Gastrocnemius medialis (tissue), 4 donors: ENCODE measurements at regions of chr2 and their contacts with region 1.

Region 1: DNA sequence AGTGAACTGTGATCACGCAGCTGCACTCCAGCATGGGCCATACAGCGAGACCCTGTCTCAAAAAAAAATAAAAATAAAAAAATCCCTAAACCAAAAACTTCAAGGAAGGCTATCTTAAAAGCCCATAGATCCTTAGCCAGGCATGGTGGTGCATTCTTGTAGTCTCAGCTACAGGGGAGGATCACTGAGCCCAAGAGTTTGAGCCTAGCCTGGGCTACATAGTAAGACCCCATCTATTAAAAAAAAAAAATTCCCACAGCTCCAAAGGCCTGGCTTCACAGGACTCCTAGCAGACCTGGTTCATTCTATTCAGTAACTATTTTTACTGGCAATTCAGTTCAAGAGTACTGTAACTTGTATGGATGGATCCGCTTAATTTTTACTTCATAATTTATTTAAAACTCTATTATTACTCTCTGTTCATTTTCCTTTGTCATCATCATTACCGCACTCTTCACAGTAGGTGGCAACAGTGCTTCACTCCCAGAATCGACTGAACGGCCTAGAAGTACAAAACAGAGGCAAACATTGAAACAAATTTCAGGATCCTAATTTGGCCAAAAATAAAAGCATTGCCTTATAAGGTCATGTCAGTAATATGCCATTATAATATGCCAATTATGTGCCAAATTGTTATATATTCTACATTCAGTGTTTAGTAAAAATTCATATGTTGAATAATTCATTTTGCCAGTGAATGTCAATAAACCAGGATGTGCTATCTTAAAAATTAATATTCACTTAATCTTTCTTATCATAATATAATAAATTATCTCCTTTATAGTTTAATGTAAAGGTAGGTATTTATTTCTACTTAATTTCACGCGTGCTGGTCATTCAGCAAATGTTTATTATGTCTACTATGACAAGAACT is 14.3 kb upstream of the STAM2 start:
- DNase-seq: peak in 1 of 2 donors; percentile 26
- ATAC-seq: peak; percentile 80 to 88
- H3K4me3 ChIP-seq: no peak overlapping the region
- H3K27ac ChIP-seq: no peak overlapping the region
- H3K4me1 ChIP-seq: no peaks in the 10 kb centered on the region
- H3K27me3 ChIP-seq: no peaks in the 10 kb centered on the region
- CTCF ChIP-seq: peak; percentile 52 to 86 (median 84)
- POLR2A ChIP-seq: no peak

Region 2: DNA sequence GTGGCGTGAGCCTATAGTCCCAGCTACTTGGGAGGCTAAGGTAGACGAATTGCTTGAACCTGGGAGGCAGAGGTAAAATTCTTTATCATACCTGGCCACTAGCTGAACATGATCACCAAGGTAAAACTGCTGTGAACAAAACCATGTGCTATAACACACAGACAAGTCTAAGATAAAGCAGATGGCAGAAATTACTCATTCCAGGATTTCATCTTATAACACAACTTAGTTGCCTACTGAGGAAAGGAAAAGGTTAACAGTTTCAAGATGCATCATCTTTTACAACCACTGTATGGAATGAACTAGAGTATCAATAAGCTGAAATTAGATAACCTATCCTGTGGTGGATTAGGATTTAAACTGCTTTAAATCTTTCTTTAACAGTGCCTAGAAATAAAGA is 369.9 kb before region 1 on chr2:
- in situ Hi-C with region 1: no loop called
- intact Hi-C with region 1: no loop called
- DNase-seq: no peak
- ATAC-seq: no peak
- H3K4me3 ChIP-seq: no peak overlapping the region
- H3K27ac ChIP-seq: no peak overlapping the region
- H3K4me1 ChIP-seq: peaks cover 33 to 36% of the 10 kb centered on the region in 2 donors
- H3K27me3 ChIP-seq: no peaks in the 10 kb centered on the region
- CTCF ChIP-seq: no peak
- POLR2A ChIP-seq: no peak

Region 3: GRCh38 chr2:152319831-152320570 is 130.1 kb after region 1 on chr2:
- in situ Hi-C with region 1: loop called in 1 of 4 experiments (anchors 10 kb)
- intact Hi-C with region 1: no loop called
- DNase-seq: no peak
- ATAC-seq: no peak
- H3K4me3 ChIP-seq: no peak overlapping the region
- H3K27ac ChIP-seq: no peak overlapping the region
- H3K4me1 ChIP-seq: no peaks in the 10 kb centered on the region
- H3K27me3 ChIP-seq: no peaks in the 10 kb centered on the region
- CTCF ChIP-seq: no peak
- POLR2A ChIP-seq: no peak

Region 4: DNA sequence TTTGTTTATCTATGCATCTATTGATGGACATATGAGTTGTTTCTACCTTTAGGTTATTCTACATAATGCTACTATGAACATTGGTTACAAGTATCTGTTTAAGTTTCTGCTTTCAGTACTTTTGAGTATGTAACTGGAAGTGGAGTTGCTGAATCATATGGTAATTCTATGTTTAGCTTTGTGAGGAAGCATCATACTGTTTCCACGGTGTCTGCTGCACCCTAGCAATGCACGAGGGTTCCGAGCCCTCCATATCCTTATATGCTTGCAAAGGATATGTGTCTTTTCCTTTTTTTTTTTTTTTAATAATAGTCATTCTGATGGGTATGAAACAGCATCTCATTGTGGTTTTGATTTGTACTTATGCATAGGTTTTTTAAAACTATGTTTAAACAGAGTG is 228.8 kb after region 1 on chr2:
- in situ Hi-C with region 1: no loop called
- intact Hi-C with region 1: loop called (anchors 5 kb)
- DNase-seq: peak; percentile 42 to 46
- ATAC-seq: peak; percentile 77 to 78
- H3K4me3 ChIP-seq: no peak overlapping the region
- H3K27ac ChIP-seq: peak overlapping the region; percentile 4 to 78 (median 32)
- H3K4me1 ChIP-seq: peaks cover 55 to 65% of the 10 kb centered on the region in 2 donors
- H3K27me3 ChIP-seq: no peaks in the 10 kb centered on the region
- CTCF ChIP-seq: no peak
- POLR2A ChIP-seq: no peak

Region 5: DNA sequence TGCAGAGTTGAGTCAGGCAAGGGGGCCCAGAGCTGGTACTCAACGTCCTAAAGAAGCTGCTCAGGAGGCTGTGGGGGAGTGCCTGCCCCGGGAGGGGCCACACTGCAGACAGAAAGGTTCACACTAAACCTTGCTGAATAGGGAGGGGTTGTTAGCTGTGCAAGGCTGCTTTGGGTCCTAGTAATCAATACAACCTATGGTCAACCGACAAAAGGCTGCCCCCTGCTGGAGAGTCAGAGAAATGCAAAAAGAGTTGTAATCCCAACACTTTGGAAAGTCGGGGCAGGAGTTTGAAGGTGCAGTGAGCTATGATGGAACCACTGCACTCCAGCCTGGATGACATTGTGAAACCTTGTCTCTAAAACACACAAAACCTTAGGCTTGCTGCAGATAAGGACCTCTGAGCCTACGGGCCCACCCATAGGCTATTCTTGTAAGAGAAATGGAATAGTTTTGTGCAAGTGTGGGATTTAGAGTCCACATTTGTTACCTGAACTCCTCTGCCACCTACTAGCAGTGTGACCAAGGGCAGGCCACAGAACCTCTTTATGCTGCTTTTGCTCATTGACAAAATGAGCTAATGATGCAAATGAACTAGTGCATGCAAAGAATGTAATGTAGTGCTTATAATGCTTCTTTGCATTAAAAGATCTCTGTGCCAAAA is 445.9 kb after region 1 on chr2:
- in situ Hi-C with region 1: loop called (anchors 5 kb)
- intact Hi-C with region 1: loop called (anchors 1 kb)
- DNase-seq: peak in 1 of 2 donors; percentile 30
- ATAC-seq: peak in 1 of 2 donors; percentile 53
- H3K4me3 ChIP-seq: no peak overlapping the region
- H3K27ac ChIP-seq: no peak overlapping the region
- H3K4me1 ChIP-seq: no peaks in the 10 kb centered on the region
- H3K27me3 ChIP-seq: no peaks in the 10 kb centered on the region
- CTCF ChIP-seq: peak; percentile 77 to 89 (median 87)
- POLR2A ChIP-seq: no peak

Region 6: DNA sequence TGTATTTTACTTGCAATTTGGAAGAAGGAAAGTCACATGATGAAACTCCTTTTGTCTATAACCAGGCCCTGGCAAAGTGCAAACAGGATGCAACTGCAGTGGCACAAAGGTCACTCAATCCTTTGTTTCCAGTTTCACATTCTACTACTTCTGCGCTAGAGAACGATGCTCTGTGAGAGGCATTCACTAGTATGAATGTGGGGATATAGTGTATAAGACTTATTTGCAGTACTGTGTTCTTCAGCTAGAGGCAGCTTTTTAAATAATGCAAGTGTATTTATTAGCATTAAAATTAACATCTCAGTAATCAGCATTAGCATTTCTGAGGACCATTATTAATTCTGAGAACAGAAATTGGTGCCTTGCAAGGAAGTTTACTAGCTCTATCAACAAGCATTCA is 458.5 kb after region 1 on chr2:
- in situ Hi-C with region 1: loop called in 1 of 4 experiments (anchors 5 kb)
- intact Hi-C with region 1: no loop called
- DNase-seq: no peak
- ATAC-seq: no peak
- H3K4me3 ChIP-seq: no peak overlapping the region
- H3K27ac ChIP-seq: peak overlapping the region; percentile 22 to 60 (median 30)
- H3K4me1 ChIP-seq: peaks cover 12 to 24% of the 10 kb centered on the region in 2 donors
- H3K27me3 ChIP-seq: no peaks in the 10 kb centered on the region
- CTCF ChIP-seq: peak in 2 of 5 experiments; percentile 13 to 25
- POLR2A ChIP-seq: no peak

Region 7: DNA sequence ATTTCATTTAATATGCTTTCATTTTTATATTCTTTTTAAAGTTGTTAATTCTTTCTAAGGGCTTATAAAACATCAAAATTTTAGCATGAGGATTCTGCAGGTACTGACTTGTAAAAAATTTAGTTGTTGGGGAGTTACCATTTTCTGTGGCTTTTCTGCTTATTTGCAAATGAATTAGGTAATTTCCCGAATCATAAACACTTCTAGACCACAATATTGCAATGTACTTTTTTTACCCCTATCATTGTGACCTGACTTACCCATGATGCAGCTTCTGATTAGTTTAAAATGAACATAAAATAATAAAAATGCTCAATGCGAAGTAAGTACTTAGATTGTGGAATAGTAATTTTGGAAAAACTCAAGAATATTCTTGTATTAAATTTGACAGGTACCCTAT is 540.0 kb after region 1 on chr2:
- in situ Hi-C with region 1: loop called in 1 of 4 experiments (anchors 10 kb)
- intact Hi-C with region 1: no loop called
- DNase-seq: no peak
- ATAC-seq: no peak
- H3K4me3 ChIP-seq: no peak overlapping the region
- H3K27ac ChIP-seq: no peak overlapping the region
- H3K4me1 ChIP-seq: peaks cover 0 to 13% of the 10 kb centered on the region in 2 donors
- H3K27me3 ChIP-seq: no peaks in the 10 kb centered on the region
- CTCF ChIP-seq: no peak
- POLR2A ChIP-seq: no peak